ENCODE measurements at regions of chr1 and their contacts with region 1.

Region 1: DNA sequence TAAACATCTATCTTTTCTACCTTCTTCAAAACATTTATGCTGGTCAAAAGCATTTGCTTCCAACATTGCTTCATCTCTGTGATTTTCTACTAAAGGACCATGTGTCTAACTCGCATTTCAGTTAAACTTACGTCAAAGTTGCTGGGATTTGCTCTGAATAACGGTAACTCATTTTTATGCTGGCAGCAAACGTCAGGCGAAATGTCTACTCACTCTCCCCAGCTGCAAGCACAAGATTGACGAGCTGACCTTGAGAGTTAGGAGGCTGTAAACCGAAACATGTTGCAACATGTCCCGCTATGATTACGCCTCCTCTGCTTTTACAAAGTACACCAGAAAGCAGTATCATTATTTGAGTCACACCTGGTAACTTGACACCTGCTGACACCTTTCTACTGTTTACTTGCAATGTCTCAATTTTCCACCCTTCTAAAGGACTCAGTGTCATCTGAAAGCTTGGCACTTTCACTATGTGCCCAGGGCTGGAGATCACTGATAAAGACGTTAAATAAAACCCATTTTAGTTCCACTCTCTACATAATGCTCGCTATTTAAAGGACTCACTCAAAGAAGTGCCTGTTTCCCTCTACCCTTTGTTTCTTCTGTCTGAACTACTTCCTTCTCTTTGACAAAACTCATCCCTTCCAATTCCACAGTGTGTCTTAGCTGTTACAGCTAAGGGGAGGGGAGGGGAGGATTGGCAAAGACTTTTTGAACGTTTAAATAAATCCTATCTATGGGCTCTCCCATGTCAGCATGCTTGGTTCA is 111.9 kb downstream of the PTPN14 start:
- DNase-seq: no peak
- H3K4me3 ChIP-seq: peak overlapping the region in 44 of 59 donors; percentile 3 to 58 (median 24)
- H3K27ac ChIP-seq: peak overlapping the region in 15 of 59 donors; percentile 1 to 39 (median 23)
- H3K27me3 ChIP-seq: no peaks in the 10 kb centered on the region
- CTCF ChIP-seq: no peak

Region 2: DNA sequence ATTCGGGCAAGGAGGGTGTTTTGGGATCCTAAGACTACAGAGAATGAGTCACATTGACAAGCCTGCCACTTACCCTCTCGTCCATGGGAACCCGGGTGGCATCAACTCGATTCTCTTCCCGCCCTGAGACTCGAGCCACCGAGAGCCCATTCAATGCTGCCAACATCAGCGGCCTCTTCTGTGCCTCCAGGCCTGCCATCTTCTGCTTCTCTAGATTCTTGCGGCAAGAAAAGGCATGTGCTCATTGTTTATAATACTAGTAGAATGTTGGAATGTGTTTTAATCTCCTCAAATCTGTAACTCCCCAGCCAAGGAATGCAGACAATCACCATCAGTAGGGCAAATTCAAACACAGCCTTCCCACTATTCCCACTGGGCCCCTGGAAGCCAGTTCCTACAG is 61.6 kb before region 1 on chr1:
- intact Hi-C with region 1: loop called in 1 of 2 experiments (anchors 10 kb)
- DNase-seq: no peak
- H3K4me3 ChIP-seq: no peak overlapping the region
- H3K27ac ChIP-seq: no peak overlapping the region
- H3K27me3 ChIP-seq: no peaks in the 10 kb centered on the region
- CTCF ChIP-seq: no peak

Region 3: DNA sequence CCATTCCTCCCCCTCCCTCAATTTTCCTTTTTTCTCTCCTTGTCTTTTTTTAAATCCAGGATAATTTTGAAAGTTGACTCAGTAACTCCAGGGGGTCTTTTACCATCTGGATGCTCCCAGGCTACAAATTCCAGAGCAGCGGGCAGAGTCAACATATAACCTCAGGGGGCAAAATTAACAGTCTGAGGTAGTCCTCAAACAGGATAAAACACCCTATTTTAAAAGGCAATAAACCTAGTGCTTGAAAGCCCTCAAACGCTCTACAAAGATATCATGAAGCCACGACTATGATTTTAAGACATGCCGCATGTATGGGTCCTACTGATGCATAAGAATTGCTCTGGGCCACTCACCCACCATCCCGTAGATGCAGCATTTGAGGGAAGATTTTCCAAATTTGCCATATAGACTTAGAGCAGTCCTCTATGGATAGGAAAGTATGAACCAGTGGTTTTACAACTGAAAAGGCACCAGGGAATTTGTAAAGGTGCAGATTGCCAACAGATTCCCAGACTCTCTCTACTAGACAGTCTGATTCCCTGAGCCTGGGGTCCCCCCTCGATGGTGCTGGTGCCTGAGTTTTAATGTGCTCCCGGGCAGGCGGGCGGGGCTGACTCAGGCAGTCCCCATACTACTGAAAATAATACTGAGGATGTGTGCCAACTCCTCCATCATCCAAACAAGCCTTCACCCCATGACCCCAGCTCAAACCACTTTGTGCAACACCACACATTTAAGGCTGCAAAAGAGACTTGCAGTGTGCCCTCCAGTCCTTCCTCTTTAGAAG is 74.7 kb after region 1 on chr1:
- intact Hi-C with region 1: no loop called
- DNase-seq: no peak
- H3K4me3 ChIP-seq: no peak overlapping the region
- H3K27ac ChIP-seq: no peak overlapping the region
- H3K27me3 ChIP-seq: no peaks in the 10 kb centered on the region
- CTCF ChIP-seq: no peak

Region 4: DNA sequence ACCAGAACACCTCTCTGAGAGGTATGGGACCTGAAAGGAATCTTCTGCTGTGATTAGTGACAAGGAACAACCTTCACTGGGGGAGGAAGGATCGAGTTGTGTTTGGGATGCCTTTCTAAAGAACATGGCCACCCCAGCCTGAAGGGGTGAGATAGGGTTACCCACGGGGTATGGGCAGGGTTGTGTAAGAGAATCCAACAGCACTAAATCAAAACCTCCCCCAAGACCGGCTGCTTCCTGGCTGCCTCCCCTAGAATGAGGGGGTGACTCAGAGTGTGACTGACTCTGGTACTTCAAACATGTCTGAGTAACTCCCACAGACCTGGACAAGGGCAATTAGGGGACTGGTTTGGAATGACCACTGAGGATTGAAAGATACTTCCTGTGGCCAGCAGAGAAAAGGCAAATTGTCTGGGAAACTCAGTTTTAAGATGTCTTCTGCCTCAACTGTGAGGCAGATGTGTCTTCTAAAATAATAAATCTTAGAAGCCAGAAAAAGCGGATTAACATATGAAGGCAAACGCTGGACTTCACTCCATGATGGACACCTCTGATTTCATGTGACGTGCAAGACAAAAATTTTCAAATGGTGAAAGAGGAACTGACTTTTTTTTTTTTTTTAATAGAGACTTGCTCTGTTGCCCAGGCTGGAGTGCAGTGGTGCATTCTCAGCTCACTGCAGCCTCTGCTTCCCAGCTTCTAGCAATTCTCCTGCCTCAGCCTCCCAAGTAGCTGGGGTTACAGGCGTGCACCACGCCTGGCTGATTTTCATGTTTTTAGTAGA is 118.6 kb after region 1 on chr1:
- intact Hi-C with region 1: no loop called
- DNase-seq: no peak
- H3K4me3 ChIP-seq: no peak overlapping the region
- H3K27ac ChIP-seq: no peak overlapping the region
- H3K27me3 ChIP-seq: peaks cover 0 to 5% (median 0%) of the 10 kb centered on the region in 45 donors
- CTCF ChIP-seq: no peak

Region 5: GRCh38 chr1:214739621-214740238 is 300.2 kb after region 1 on chr1:
- intact Hi-C with region 1: no loop called
- DNase-seq: no peak
- H3K4me3 ChIP-seq: no peak overlapping the region
- H3K27ac ChIP-seq: no peak overlapping the region
- H3K27me3 ChIP-seq: peaks cover 0 to 9% (median 0%) of the 10 kb centered on the region in 45 donors
- CTCF ChIP-seq: no peak

Region 6: GRCh38 chr1:215243345-215244054 is 804.0 kb after region 1 on chr1:
- intact Hi-C with region 1: no loop called
- DNase-seq: no peak
- H3K4me3 ChIP-seq: no peak overlapping the region
- H3K27ac ChIP-seq: no peak overlapping the region
- H3K27me3 ChIP-seq: peaks cover 0 to 4% (median 0%) of the 10 kb centered on the region in 45 donors
- CTCF ChIP-seq: no peak

Measured in dorsolateral prefrontal cortex (tissue), 120 donors.